ENCODE measurements at regions of chr11 and their contacts with region 1.

Region 1: GRCh38 chr11:84686716-84687115 is 940.4 kb downstream of the DLG2 start:
- DNase-seq: no peak

Region 2: GRCh38 chr11:84671334-84671999 is 15.2 kb before region 1 on chr11:
- intact Hi-C with region 1: loop called in 1 of 2 experiments (anchors 1 kb)
- DNase-seq: no peak

Region 3: DNA sequence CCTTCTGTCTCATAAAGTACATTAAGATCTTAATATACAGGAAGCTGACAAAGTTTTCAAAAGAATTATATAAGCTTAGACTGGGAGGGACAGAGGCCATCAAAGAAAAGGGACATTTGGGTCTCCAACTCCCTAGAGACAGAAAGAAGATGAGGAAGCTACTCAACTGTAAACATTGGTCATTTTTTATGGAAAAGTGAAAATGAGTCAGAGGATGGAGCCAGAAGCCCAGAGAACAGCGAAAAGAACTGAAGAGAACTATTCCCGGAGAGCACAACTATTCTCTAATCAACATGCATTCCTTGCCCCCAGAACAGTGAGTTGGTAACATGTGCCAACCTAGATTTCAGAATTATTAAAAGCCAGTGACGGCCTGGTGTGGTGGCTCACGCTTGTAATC is 161.1 kb after region 1 on chr11:
- intact Hi-C with region 1: no loop called
- DNase-seq: no peak

Measured in posterior vena cava (tissue), 2 donors.